ENCODE measurements at regions of chr17 and their contacts with region 1.

Region 1: GRCh38 chr17:80800481-80801391 is 190.9 kb upstream of the CHMP6 start:
- DNase-seq: peak in 1 of 2 donors; percentile 24
- H3K4me3 ChIP-seq: no peak overlapping the region
- H3K27ac ChIP-seq: no peak overlapping the region
- H3K4me1 ChIP-seq: no peaks in the 10 kb centered on the region
- H3K27me3 ChIP-seq: no peaks in the 10 kb centered on the region
- CTCF ChIP-seq: no peak
- POLR2A ChIP-seq: no peak

Region 2: DNA sequence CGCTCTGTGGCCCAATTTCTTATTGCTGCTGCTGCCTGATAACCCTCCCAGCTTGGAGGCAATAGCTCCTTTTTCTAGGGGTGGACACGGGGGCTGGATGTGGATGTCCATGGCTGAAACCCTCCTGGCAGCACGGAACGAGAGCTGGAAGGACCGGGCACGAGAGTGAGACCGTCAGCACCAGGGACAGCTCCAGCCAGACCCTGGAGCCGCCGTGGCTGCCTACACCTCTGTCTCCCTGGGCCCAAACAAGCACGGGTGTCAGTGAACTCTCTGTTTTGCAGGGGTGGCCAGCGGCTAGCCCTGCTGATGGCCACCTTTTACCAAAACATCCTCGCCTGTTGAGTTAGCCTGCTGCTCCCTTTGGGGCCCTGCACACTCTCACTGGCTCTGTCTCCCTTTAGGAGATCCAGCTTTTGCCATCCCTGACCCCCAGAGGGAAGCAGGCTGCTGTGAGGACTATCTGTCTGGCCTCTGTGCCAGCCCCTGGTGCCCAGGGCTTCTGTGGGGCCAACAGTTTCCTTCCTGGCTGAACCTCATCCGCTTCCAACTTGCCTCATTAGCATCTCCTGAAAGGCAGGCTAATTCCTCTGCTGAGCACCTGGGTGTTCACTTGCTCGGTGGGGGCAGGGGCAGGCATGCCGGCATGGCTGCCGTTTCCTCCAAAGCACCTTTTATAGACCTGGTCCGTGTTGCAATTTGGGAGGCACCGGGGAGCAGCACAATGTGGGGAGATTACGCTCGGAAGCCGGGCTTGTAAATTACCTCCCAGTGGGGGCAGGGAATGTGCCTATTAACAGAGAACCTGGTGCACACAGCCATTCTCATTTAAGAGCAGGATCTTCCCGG is 1608.0 kb before region 1 on chr17:
- intact Hi-C with region 1: loop called (anchors 5 kb)
- DNase-seq: no peak
- H3K4me3 ChIP-seq: no peak overlapping the region
- H3K27ac ChIP-seq: no peak overlapping the region
- H3K4me1 ChIP-seq: no peaks in the 10 kb centered on the region
- H3K27me3 ChIP-seq: peaks cover 0 to 72% of the 10 kb centered on the region in 2 donors
- CTCF ChIP-seq: no peak
- POLR2A ChIP-seq: no peak

Region 3: DNA sequence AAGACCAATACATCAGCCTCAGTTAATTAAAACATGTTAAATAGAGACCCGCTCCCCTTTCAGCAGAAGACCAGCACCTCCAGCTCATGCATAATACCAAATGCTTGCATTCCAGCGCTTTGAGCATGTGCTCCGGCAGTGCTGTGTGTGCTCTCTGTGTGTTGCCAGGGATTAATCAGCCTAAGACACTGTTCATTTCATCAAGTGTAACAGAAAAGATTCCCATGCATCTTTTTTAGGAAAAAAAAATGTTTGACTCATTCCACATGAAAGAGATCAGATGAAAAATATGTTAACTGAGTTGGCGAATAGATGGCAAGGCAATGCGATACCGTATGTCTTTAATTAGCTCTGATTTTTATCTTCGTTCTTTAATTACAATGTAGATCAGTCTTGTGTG is 68.5 kb before region 1 on chr17:
- intact Hi-C with region 1: no loop called
- DNase-seq: no peak
- H3K4me3 ChIP-seq: no peak overlapping the region
- H3K27ac ChIP-seq: no peak overlapping the region
- H3K4me1 ChIP-seq: no peaks in the 10 kb centered on the region
- H3K27me3 ChIP-seq: no peaks in the 10 kb centered on the region
- CTCF ChIP-seq: no peak
- POLR2A ChIP-seq: no peak

Measured in breast epithelium (tissue), 4 donors.